ENCODE measurements at regions of chr3 and their contacts with region 1.

Region 1: GRCh38 chr3:107660306-107660976 is 137.7 kb downstream of the BBX start:
- DNase-seq: no peak
- H3K4me3 ChIP-seq: no peak overlapping the region
- H3K27ac ChIP-seq: no peak overlapping the region
- H3K4me1 ChIP-seq: peaks cover 0 to 9% (median under 1%) of the 10 kb centered on the region in 4 experiments; a peak in 3 of 7 replicates
- H3K27me3 ChIP-seq: no peaks in the 10 kb centered on the region
- CTCF ChIP-seq: peak in 1 of 3 experiments; percentile 48; a peak in 1 of 4 replicates
- EP300 ChIP-seq: no peak
- POLR2A ChIP-seq: no peak
- RAD21 ChIP-seq: peak in 1 of 2 experiments; percentile 48; a peak in 3 of 4 replicates

Region 2: GRCh38 chr3:107468802-107469201 is 191.6 kb before region 1 on chr3:
- CTCF ChIA-PET with region 1: no interaction called
- POLR2A ChIA-PET with region 1: no interaction called
- DNase-seq: no peak
- H3K4me3 ChIP-seq: no peak overlapping the region
- H3K27ac ChIP-seq: no peak overlapping the region
- H3K4me1 ChIP-seq: peaks cover 0 to 6% (median 2%) of the 10 kb centered on the region in 4 experiments; a peak in 3 of 7 replicates
- H3K27me3 ChIP-seq: no peaks in the 10 kb centered on the region
- CTCF ChIP-seq: no peak
- EP300 ChIP-seq: no peak
- POLR2A ChIP-seq: no peak
- RAD21 ChIP-seq: no peak

Region 3: GRCh38 chr3:107643038-107643883 is 17.2 kb before region 1 on chr3:
- CTCF ChIA-PET with region 1: interaction called, 49 read pairs
- POLR2A ChIA-PET with region 1: no interaction called
- DNase-seq: peak in 1 of 2 experiments; percentile 58
- H3K4me3 ChIP-seq: no peak overlapping the region
- H3K27ac ChIP-seq: no peak overlapping the region
- H3K4me1 ChIP-seq: peaks cover 6 to 12% (median 10%) of the 10 kb centered on the region in 4 experiments; a peak in 6 of 7 replicates
- H3K27me3 ChIP-seq: no peaks in the 10 kb centered on the region
- CTCF ChIP-seq: peak; percentile 18 to 46 (median 43); a peak in 3 of 4 replicates
- EP300 ChIP-seq: no peak
- POLR2A ChIP-seq: no peak
- RAD21 ChIP-seq: peak; percentile 37 to 50

Measured in H1 (cell line).